CD8-positive, alpha-beta T cell (primary cell): ENCODE measurements at regions of chr17 and their contacts with region 1.

Region 1: DNA sequence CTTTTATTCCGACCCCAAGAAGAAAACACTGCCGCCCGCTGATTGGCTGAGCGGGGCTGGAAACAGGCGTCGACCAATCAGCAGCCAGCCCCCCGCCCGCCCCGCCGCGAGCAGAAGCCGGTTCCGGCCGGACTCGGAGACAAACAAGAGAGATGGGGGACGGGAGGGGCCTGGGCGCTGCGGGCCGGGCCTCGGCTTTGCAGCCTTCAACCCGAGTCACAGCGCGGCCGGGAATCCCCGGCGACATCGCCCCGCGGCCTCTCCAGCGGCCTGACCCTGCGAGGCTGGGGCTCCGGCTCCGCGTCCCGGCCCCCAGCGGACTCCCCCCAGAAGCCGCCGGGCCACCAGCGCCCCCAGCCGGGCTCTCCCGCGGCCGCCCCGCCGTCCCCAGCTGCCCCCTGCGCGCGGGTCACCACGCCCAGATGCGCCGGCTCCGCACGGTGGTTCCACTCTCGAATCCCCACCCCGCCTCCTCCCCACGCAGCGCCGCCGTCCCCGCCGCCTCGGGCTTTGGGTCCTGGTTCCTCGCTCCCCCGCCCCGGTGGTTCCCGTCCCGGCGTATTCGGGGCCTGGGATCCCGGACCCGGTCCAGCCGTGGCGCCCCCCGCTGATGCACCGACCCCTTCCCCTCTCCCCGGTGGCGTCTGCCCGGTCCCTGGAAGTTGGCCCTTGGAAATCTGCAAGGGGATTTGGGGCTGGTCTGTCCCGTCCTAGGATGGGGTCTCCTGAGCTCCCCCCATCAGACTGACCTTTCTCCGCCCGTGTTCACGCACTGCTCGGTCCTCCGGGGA is 417 bp upstream of the SLC43A2 start:
- DNase-seq: peak; percentile 81 to 95 (median 91)
- ATAC-seq: peak; percentile 70
- H3K4me3 ChIP-seq: peak overlapping the region; percentile 70 to 90
- H3K4me3 Mint-ChIP-seq: peak overlapping the region; percentile 95
- H3K27ac ChIP-seq: peak overlapping the region; percentile 43 to 79
- H3K27ac Mint-ChIP-seq: peak overlapping the region; percentile 90
- H3K4me1 ChIP-seq: peaks cover 20% of the 10 kb centered on the region
- H3K4me1 Mint-ChIP-seq: peaks cover 19% of the 10 kb centered on the region
- H3K27me3 ChIP-seq: no peaks in the 10 kb centered on the region
- H3K27me3 Mint-ChIP-seq: no peaks in the 10 kb centered on the region
- CTCF ChIP-seq: no peak

Region 2: GRCh38 chr17:1087381-1088241 is 541.4 kb before region 1 on chr17:
- CTCF ChIA-PET with region 1: no interaction called
- POLR2A ChIA-PET with region 1: no interaction called
- intact Hi-C with region 1: no loop called
- DNase-seq: no peak
- ATAC-seq: no peak
- H3K4me3 ChIP-seq: no peak overlapping the region
- H3K4me3 Mint-ChIP-seq: no peak overlapping the region
- H3K27ac ChIP-seq: no peak overlapping the region
- H3K27ac Mint-ChIP-seq: no peak overlapping the region
- H3K4me1 ChIP-seq: no peaks in the 10 kb centered on the region
- H3K4me1 Mint-ChIP-seq: no peaks in the 10 kb centered on the region
- H3K27me3 ChIP-seq: no peaks in the 10 kb centered on the region
- H3K27me3 Mint-ChIP-seq: no peaks in the 10 kb centered on the region
- CTCF ChIP-seq: no peak

Region 3: GRCh38 chr17:1260086-1260769 is 368.8 kb before region 1 on chr17:
- CTCF ChIA-PET with region 1: no interaction called
- POLR2A ChIA-PET with region 1: no interaction called
- intact Hi-C with region 1: loop called (anchors 5 kb)
- DNase-seq: no peak
- ATAC-seq: no peak
- H3K4me3 ChIP-seq: peak overlapping the region in 1 of 2 experiments; percentile 49
- H3K4me3 Mint-ChIP-seq: peak overlapping the region; percentile 49
- H3K27ac ChIP-seq: no peak overlapping the region
- H3K27ac Mint-ChIP-seq: no peak overlapping the region
- H3K4me1 ChIP-seq: peaks cover 24% of the 10 kb centered on the region
- H3K4me1 Mint-ChIP-seq: peaks cover 31% of the 10 kb centered on the region
- H3K27me3 ChIP-seq: peaks cover 0 to 6% of the 10 kb centered on the region in 2 experiments
- H3K27me3 Mint-ChIP-seq: peaks cover 18% of the 10 kb centered on the region
- CTCF ChIP-seq: no peak

Region 4: DNA sequence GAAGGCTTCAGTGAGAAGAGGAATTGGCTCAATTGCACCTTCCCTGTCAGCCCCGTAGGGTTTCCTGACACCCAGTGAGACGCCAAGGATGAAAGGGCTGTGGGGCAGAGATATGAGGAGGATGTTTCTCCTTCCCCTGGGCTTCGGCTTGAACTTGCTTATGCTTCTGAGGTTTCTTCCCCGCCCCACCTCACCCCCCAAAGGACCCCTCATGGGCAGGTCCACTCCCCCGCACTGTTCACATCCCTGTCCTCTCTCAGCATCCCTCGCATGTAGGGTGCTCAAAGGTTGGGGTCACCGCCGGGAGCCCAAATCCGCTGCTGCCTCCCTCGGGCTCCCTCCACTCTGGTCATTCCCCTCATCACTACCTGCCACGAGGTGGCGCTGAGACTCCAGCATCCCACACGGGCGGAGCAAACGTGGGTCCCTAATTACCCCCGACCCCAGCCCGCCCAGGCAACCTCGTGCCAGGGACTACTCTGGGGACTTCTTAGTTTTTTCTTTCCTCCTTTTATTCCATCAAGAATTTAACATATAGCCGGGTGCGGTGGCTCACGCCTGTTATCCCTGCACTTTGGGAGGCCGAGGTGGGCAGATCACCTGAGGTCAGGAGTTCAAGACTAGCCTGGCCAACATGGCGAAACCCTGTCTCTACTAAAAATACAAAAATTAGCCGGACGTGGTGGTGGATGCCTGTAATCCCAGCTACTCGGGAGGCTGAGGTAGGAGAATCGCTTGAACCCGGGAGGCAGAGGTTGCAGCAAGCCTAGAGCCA is 352.9 kb before region 1 on chr17:
- CTCF ChIA-PET with region 1: no interaction called
- POLR2A ChIA-PET with region 1: no interaction called
- intact Hi-C with region 1: loop called (anchors 1 to 5 kb)
- DNase-seq: peak; percentile 49 to 84 (median 79)
- ATAC-seq: peak; percentile 90
- H3K4me3 ChIP-seq: no peak overlapping the region
- H3K4me3 Mint-ChIP-seq: no peak overlapping the region
- H3K27ac ChIP-seq: no peak overlapping the region
- H3K27ac Mint-ChIP-seq: no peak overlapping the region
- H3K4me1 ChIP-seq: no peaks in the 10 kb centered on the region
- H3K4me1 Mint-ChIP-seq: peaks cover 8% of the 10 kb centered on the region
- H3K27me3 ChIP-seq: no peaks in the 10 kb centered on the region
- H3K27me3 Mint-ChIP-seq: peaks cover 32% of the 10 kb centered on the region
- CTCF ChIP-seq: peak; percentile 88

Region 5: DNA sequence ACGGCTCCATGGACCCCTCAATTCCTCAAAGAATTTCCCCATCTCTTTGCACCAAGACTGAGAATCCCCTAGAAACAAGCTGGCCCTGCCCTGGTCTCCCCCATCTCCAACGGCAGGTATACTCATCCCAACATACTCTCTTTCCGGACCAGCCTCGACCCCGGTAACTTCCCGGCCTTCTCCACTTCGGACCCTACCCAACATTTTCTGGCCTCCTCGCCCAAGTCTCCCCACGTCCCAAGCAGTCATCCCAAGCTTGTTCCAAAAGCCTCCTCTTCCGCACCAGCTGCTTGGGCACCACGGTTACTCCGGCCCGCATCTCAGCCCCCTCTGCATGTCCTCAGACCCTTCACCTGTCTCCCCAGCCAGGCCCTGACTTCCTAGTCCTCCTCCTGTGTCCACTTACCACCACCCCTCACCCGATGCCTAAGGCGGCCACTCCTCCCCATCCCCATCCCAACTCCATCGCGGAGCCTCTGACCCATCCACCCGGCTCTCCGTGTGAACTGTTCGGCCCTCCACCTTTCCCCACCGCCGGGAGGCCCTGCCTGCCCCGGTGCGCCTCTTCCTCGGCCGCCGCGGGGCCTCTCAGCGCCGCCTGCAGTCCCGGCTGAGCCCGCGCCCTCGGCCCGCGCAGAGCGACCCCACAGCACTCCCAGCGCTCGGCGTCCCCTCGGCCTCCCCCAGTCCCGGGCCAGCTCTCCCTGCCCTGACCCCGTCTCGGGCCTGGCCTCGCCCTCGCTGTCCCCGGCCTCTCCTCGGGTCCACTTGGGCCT is 67.5 kb before region 1 on chr17:
- CTCF ChIA-PET with region 1: interaction called, 3 read pairs
- POLR2A ChIA-PET with region 1: interaction called, 6 read pairs
- intact Hi-C with region 1: loop called (anchors 1 kb)
- DNase-seq: peak in 8 of 9 experiments; percentile 16 to 62 (median 34)
- ATAC-seq: peak; percentile 35
- H3K4me3 ChIP-seq: peak overlapping the region; percentile 40 to 41
- H3K4me3 Mint-ChIP-seq: peak overlapping the region; percentile 83
- H3K27ac ChIP-seq: peak overlapping the region in 1 of 2 experiments; percentile 40
- H3K27ac Mint-ChIP-seq: peak overlapping the region; percentile 66
- H3K4me1 ChIP-seq: peaks cover 19% of the 10 kb centered on the region
- H3K4me1 Mint-ChIP-seq: peaks cover 45% of the 10 kb centered on the region
- H3K27me3 ChIP-seq: no peaks in the 10 kb centered on the region
- H3K27me3 Mint-ChIP-seq: no peaks in the 10 kb centered on the region
- CTCF ChIP-seq: peak; percentile 38

Region 6: GRCh38 chr17:1573916-1574696 is 54.9 kb before region 1 on chr17:
- CTCF ChIA-PET with region 1: interaction called, 6 read pairs
- POLR2A ChIA-PET with region 1: no interaction called
- intact Hi-C with region 1: loop called (anchors 2 kb)
- DNase-seq: peak in 8 of 9 experiments; percentile 35 to 67 (median 48)
- ATAC-seq: peak; percentile 55
- H3K4me3 ChIP-seq: no peak overlapping the region
- H3K4me3 Mint-ChIP-seq: no peak overlapping the region
- H3K27ac ChIP-seq: no peak overlapping the region
- H3K27ac Mint-ChIP-seq: no peak overlapping the region
- H3K4me1 ChIP-seq: no peaks in the 10 kb centered on the region
- H3K4me1 Mint-ChIP-seq: no peaks in the 10 kb centered on the region
- H3K27me3 ChIP-seq: no peaks in the 10 kb centered on the region
- H3K27me3 Mint-ChIP-seq: no peaks in the 10 kb centered on the region
- CTCF ChIP-seq: peak; percentile 43

Region 7: GRCh38 chr17:1643293-1643998 is 14.4 kb after region 1 on chr17:
- CTCF ChIA-PET with region 1: interaction called, 13 read pairs
- POLR2A ChIA-PET with region 1: interaction called, 22 read pairs
- intact Hi-C with region 1: loop called in 1 of 2 experiments (anchors 1 kb)
- DNase-seq: peak; percentile 42 to 88 (median 76)
- ATAC-seq: peak; percentile 89
- H3K4me3 ChIP-seq: peak overlapping the region; percentile 25 to 71
- H3K4me3 Mint-ChIP-seq: peak overlapping the region; percentile 85
- H3K27ac ChIP-seq: no peak overlapping the region
- H3K27ac Mint-ChIP-seq: no peak overlapping the region
- H3K4me1 ChIP-seq: peaks cover 23% of the 10 kb centered on the region
- H3K4me1 Mint-ChIP-seq: peaks cover 15% of the 10 kb centered on the region
- H3K27me3 ChIP-seq: no peaks in the 10 kb centered on the region
- H3K27me3 Mint-ChIP-seq: no peaks in the 10 kb centered on the region
- CTCF ChIP-seq: peak; percentile 29

Region 8: DNA sequence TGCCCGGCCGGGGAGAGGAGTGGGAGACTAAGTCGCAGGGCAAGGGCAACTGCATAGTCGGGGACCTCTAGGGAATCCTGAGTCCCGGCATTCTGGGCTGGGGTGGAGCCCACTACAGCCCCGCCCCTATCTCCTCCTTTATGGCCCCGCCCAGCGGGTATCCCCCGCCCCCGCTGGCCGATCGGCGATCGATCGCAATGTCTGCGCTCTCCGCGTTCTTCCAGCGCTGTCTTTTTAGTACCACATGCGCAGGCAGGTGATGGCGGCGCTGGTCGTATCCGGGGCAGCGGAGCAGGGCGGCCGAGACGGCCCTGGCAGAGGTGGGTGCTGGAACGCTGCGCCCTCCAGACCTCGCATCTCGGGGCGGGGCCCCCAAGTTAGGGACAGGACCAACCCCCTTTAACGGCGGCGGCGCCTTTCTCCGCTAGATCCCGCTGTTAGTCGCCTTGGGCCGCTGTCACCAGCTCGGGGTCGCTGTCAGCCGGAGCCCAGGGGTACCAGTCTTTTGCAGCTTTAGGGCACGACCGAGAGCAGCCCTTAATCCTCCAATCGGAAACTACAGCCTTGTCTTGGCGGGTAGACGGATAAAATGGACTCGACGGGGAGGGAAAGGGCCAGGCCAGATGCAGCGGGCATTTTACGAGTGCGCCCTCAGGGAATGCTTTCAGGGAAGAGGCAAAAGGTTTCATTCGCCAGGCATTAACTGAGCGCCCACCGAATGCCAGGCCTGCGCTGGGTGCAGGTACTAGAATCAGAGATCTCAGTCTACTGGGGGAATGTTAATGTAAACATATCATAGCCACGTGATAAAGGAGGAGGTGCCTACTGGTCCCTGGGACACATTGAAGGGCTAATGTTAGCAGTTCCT is 401.1 kb after region 1 on chr17 and contains the start of gene DPH1:
- CTCF ChIA-PET with region 1: no interaction called
- POLR2A ChIA-PET with region 1: no interaction called
- intact Hi-C with region 1: loop called in 1 of 2 experiments (anchors 1 kb)
- DNase-seq: peak; percentile 66 to 92 (median 85)
- ATAC-seq: peak; percentile 81
- H3K4me3 ChIP-seq: peak within 1 kb of the TSS; percentile 93 to 100
- H3K4me3 Mint-ChIP-seq: peak within 1 kb of the TSS; percentile 97
- H3K27ac ChIP-seq: peak within 1 kb of the TSS; percentile 73 to 81
- H3K27ac Mint-ChIP-seq: peak within 1 kb of the TSS; percentile 86
- H3K4me1 ChIP-seq: peaks cover 34% of the 10 kb centered on the region
- H3K4me1 Mint-ChIP-seq: peaks cover 34% of the 10 kb centered on the region
- H3K27me3 ChIP-seq: peaks cover 0 to 18% of the 10 kb centered on the region in 2 experiments
- H3K27me3 Mint-ChIP-seq: peaks cover 12% of the 10 kb centered on the region
- CTCF ChIP-seq: no peak
- total RNA-seq, gene DPH1: 128 to 149 TPM